B cell (primary cell): ENCODE measurements at regions of chr1 and their contacts with region 1.

Region 1: DNA sequence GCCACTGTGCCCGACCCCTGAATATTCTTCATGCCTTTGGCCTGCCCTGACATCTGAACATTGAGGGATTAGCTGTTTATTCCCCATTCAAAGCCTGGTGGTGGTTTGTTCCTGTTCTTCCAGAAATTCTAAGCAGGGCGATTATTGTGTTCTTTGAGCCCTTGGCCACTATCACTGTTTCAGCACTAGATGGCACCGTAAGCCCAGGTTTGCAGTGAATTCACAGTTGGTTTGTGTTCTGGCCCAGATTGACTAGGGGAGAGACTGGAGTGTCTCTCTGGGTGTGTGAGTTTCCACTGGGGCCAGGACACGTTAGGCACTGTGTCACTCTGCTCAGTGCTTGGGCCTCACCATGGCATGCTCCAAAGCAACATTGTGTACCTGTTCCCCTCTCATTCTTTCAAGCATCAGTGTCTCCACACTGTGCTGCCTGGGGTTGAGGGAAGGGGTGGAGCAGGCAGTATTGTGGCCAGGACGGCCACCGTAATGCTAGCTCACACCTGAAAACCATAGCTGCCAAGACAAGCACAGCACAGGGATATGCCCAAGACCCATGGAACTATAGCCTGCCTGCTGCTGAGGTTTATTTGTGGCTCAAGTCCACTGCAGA is 52.7 kb downstream of the PKN2 start:
- DNase-seq: peak; percentile 8
- ATAC-seq: no peak
- H3K4me3 ChIP-seq: no peak overlapping the region
- H3K4me3 Mint-ChIP-seq: no peak overlapping the region
- H3K27ac ChIP-seq: no peak overlapping the region
- H3K27ac Mint-ChIP-seq: no peak overlapping the region
- H3K4me1 ChIP-seq: no peaks in the 10 kb centered on the region
- H3K4me1 Mint-ChIP-seq: peaks cover 6% of the 10 kb centered on the region
- H3K27me3 ChIP-seq: no peaks in the 10 kb centered on the region
- H3K27me3 Mint-ChIP-seq: no peaks in the 10 kb centered on the region
- CTCF ChIP-seq: no peak

Region 2: GRCh38 chr1:88708021-88708420 is 28.7 kb before region 1 on chr1:
- CTCF ChIA-PET with region 1: no interaction called
- POLR2A ChIA-PET with region 1: no interaction called
- intact Hi-C with region 1: no loop called
- DNase-seq: no peak
- ATAC-seq: no peak
- H3K4me3 ChIP-seq: no peak overlapping the region
- H3K4me3 Mint-ChIP-seq: no peak overlapping the region
- H3K27ac ChIP-seq: no peak overlapping the region
- H3K27ac Mint-ChIP-seq: no peak overlapping the region
- H3K4me1 ChIP-seq: no peaks in the 10 kb centered on the region
- H3K4me1 Mint-ChIP-seq: peaks cover 12% of the 10 kb centered on the region
- H3K27me3 ChIP-seq: no peaks in the 10 kb centered on the region
- H3K27me3 Mint-ChIP-seq: no peaks in the 10 kb centered on the region
- CTCF ChIP-seq: no peak

Region 3: DNA sequence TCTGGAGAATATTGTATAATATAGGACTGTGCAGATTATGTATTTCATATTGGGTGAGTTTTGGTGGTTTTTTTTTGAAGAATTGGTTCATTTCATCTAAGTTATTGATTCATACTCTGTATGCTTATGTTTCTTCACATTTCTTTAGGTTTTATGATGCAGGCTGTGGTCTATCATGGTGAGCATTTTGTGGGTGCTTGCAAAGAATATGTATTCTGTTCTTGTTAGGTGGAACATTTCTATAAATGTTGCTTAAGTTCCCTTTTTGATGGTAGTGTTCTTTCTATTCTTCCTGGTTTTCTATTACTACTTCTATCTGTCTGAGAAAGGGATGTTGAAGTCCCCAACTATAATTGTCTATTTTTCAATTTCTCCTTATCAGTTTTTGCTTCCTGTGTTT is 10.0 kb before region 1 on chr1:
- CTCF ChIA-PET with region 1: no interaction called
- POLR2A ChIA-PET with region 1: no interaction called
- intact Hi-C with region 1: loop called (anchors 1 kb)
- DNase-seq: no peak
- ATAC-seq: no peak
- H3K4me3 ChIP-seq: no peak overlapping the region
- H3K4me3 Mint-ChIP-seq: no peak overlapping the region
- H3K27ac ChIP-seq: no peak overlapping the region
- H3K27ac Mint-ChIP-seq: no peak overlapping the region
- H3K4me1 ChIP-seq: peaks cover 0 to 6% of the 10 kb centered on the region in 2 donors
- H3K4me1 Mint-ChIP-seq: peaks cover 35% of the 10 kb centered on the region
- H3K27me3 ChIP-seq: no peaks in the 10 kb centered on the region
- H3K27me3 Mint-ChIP-seq: no peaks in the 10 kb centered on the region
- CTCF ChIP-seq: no peak